Breast epithelium (tissue), 4 donors: ENCODE measurements at regions of chr9 and their contacts with region 1.

Region 1: DNA sequence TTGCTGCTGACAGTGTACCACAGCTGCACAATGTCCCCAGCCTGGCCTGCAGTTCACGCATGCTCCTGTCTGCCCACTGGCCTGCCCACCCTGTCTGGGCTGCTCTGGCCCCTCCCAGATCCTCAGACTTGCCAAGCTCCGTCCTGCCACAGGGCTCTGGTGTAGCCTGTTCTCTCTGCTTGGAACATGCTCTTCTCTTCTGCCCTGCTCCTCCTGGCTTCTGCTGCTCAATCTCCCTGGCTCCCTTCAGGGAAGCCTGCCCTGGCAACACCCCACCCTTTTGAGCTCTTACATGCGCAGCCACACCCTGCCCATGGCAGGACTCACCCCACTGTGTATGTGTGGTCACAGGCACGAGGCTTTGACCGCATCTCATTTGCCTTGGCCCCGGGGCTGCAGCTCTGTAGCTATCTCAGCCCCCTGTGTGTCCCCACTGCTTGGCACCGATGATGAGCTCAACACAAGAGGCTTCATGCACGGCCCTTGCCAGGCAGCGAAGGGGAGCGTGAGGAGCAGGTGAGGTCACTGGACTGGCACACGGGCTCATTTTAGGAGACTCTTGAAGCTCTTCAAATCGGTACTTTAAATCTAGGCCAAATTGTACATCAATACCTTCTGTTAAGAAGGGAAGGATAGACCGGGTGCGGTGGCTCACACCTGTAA is 20.4 kb upstream of the BRD3 start:
- DNase-seq: no peak
- H3K4me3 ChIP-seq: no peak overlapping the region
- H3K27ac ChIP-seq: no peak overlapping the region
- H3K4me1 ChIP-seq: no peaks in the 10 kb centered on the region
- H3K27me3 ChIP-seq: no peaks in the 10 kb centered on the region
- CTCF ChIP-seq: no peak
- POLR2A ChIP-seq: no peak

Region 2: DNA sequence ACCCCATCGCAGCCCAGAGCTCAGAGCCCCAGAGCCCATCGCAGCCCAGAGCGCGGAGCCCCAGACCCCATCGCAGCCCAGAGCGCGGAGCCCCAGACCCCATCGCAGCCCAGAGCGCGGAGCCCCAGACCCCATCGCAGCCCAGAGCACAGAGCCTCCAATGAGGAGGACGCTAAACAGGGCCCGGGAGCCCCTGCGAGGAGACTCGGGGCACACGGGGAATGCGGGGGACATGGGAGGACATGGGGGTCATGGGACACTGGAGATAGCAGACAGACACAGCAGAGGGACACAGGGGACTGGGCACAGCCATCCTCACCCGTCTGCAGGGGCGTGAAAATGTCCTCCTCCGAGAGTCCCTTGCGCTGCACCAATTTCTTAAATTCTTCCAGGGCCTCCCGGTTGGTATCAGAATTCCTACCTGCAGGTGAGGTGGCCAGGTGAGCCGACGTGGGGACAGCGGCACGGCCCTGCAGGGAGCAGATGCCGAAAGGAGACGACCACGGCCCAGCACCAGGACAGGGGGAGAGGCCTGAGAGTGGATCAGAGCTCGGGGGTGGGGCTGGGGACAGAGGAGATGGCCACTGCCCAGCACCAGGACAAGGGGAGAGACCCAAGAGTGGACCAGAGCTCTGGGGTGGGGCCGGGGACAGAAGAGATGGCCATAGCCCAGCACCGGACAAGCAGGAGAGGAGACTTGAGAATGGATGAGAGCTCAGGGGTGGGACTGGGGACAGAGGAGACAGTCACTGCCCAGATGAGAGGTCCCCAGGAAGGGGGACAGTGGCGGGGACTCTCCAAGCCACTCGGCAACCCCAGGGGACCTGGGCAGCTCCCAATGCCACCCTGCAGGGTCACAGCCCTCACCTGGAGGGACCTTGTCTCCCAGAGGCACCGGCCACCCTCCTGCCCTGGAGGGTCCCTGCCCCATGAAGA is 881.9 kb before region 1 on chr9:
- intact Hi-C with region 1: loop called (anchors 5 kb)
- DNase-seq: peak in 1 of 2 donors; percentile 2
- H3K4me3 ChIP-seq: no peak overlapping the region
- H3K27ac ChIP-seq: no peak overlapping the region
- H3K4me1 ChIP-seq: no peaks in the 10 kb centered on the region
- H3K27me3 ChIP-seq: no peaks in the 10 kb centered on the region
- CTCF ChIP-seq: no peak
- POLR2A ChIP-seq: no peak